ENCODE measurements at regions of chr2 and their contacts with region 1.

Region 1: GRCh38 chr2:3930246-3930645 is 226.9 kb downstream of the DCDC2C start:
- DNase-seq: no peak
- ATAC-seq: no peak
- H3K4me3 ChIP-seq: no peak overlapping the region
- H3K27ac ChIP-seq: no peak overlapping the region
- H3K4me1 ChIP-seq: no peaks in the 10 kb centered on the region
- H3K27me3 ChIP-seq: no peaks in the 10 kb centered on the region
- CTCF ChIP-seq: no peak

Region 2: GRCh38 chr2:3633089-3633981 is 296.9 kb before region 1 on chr2:
- intact Hi-C with region 1: no loop called
- DNase-seq: peak in 1 of 2 donors; percentile 5
- ATAC-seq: peak in 1 of 8 donors; percentile 39
- H3K4me3 ChIP-seq: no peak overlapping the region
- H3K27ac ChIP-seq: no peak overlapping the region
- H3K4me1 ChIP-seq: peaks cover 0 to 11% (median 2%) of the 10 kb centered on the region in 9 donors
- H3K27me3 ChIP-seq: no peaks in the 10 kb centered on the region
- CTCF ChIP-seq: no peak

Region 3: GRCh38 chr2:3895021-3895420 is 35.2 kb before region 1 on chr2:
- intact Hi-C with region 1: loop called in 1 of 10 experiments (anchors 1 kb)
- DNase-seq: no peak
- ATAC-seq: no peak
- H3K4me3 ChIP-seq: no peak overlapping the region
- H3K27ac ChIP-seq: no peak overlapping the region
- H3K4me1 ChIP-seq: no peaks in the 10 kb centered on the region
- H3K27me3 ChIP-seq: peaks cover 0 to 7% (median 0%) of the 10 kb centered on the region in 7 donors
- CTCF ChIP-seq: no peak

Region 4: GRCh38 chr2:3959372-3959771 is 29.1 kb after region 1 on chr2:
- intact Hi-C with region 1: loop called in 1 of 10 experiments (anchors 1 kb)
- DNase-seq: no peak
- ATAC-seq: no peak
- H3K4me3 ChIP-seq: no peak overlapping the region
- H3K27ac ChIP-seq: no peak overlapping the region
- H3K4me1 ChIP-seq: no peaks in the 10 kb centered on the region
- H3K27me3 ChIP-seq: peaks cover 0 to 36% (median 5%) of the 10 kb centered on the region in 7 donors
- CTCF ChIP-seq: peak; percentile 63 to 82 (median 73)

Region 5: DNA sequence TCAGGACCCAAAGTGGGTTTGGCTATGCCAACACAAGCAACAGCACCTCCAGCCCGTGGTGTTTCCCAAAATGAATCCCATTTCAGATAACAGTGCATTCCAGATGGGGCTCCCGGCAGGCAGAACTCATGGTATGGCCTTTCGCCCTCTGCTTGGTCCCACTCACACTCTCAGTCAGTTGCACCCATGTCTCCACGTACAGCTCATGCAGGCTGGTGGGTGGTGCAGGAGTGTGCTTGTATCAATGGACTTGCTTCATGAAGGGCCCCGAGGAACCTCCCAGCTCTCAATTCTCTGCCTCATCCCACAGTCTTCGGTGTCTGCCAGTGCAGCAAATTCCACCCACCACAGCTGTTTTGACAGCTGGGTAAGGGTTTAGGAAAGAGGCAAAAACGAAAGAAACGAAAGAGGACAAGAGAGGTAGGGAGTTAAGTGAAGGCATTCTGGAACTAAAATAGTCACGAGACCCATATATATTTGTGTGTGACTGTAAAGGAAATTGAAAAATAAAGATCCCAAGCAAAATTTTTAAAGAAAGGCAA is 51.3 kb after region 1 on chr2:
- intact Hi-C with region 1: no loop called
- DNase-seq: no peak
- ATAC-seq: no peak
- H3K4me3 ChIP-seq: no peak overlapping the region
- H3K27ac ChIP-seq: no peak overlapping the region
- H3K4me1 ChIP-seq: no peaks in the 10 kb centered on the region
- H3K27me3 ChIP-seq: peaks cover 0 to 5% (median 0%) of the 10 kb centered on the region in 7 donors
- CTCF ChIP-seq: no peak

Measured in heart right ventricle (tissue), 16 donors.